GM10248 (cell line): ENCODE measurements at regions of chr2 and their contacts with region 1.

Region 1: GRCh38 chr2:69816923-69817542 is 12.4 kb upstream of the GMCL1 start:
- DNase-seq: peak; percentile 59
- CTCF ChIP-seq: peak; percentile 74

Region 2: DNA sequence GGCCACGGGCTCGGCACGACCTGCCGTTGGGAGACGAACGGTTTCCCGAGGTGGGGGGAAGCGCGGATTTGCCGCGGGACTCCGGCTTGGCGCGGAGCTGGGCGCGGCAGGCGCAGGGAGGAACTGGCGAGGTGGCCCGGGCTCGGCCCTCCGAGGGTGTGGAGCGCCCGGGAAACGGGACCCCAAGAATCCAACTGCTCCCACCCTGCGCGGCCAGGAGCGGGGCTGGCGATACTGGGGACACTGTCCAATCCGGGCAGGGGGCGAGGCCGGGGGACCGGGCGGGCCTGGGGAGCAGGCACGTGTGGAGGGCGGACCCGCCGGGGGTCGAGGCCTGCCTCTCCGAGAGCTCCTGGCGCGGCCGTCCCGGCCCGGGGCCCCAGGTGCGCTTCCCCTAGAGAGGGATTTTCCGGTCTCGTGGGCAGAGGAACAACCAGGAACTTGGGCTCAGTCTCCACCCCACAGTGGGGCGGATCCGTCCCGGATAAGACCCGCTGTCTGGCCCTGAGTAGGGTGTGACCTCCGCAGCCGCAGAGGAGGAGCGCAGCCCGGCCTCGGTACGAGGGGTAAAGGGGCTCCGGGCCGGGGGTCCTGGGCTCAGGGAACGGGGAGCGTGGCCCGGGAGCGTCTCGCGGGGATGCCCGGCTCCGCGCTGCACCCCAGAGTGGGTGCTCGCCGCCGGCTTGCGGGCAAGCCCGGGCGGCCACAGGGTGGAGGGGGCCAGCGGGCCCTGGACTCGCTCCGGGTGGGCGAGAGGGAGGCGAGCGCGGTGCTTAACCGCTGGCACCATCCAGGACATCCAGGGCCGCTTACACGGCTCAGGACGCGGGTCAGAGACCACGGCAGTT is 75.2 kb before region 1 on chr2 and contains the start of gene ANXA4:
- CTCF ChIA-PET with region 1: interaction called, 49 read pairs
- POLR2A ChIA-PET with region 1: no interaction called
- DNase-seq: peak; percentile 86
- CTCF ChIP-seq: no peak

Region 3: GRCh38 chr2:69781321-69782248 is 35.4 kb before region 1 on chr2:
- CTCF ChIA-PET with region 1: interaction called, 12 read pairs
- POLR2A ChIA-PET with region 1: no interaction called
- DNase-seq: no peak
- CTCF ChIP-seq: no peak

Region 4: GRCh38 chr2:69798909-69799526 is 18.0 kb before region 1 on chr2:
- CTCF ChIA-PET with region 1: interaction called, 141 read pairs
- POLR2A ChIA-PET with region 1: no interaction called
- DNase-seq: no peak
- CTCF ChIP-seq: no peak

Region 5: GRCh38 chr2:69829256-69830046 is 12.4 kb after region 1 on chr2 and contains the start of gene GMCL1:
- CTCF ChIA-PET with region 1: interaction called, 61 read pairs
- POLR2A ChIA-PET with region 1: interaction called, 9 read pairs
- DNase-seq: peak; percentile 95
- CTCF ChIP-seq: no peak

Region 6: GRCh38 chr2:70128005-70128404 is 311.0 kb after region 1 on chr2:
- CTCF ChIA-PET with region 1: no interaction called
- POLR2A ChIA-PET with region 1: no interaction called
- DNase-seq: no peak
- CTCF ChIP-seq: no peak